Naive thymus-derived CD4-positive, alpha-beta T cell (primary cell): ENCODE measurements at regions of chr7 and their contacts with region 1.

Region 1: GRCh38 chr7:4610768-4611467 is 71.2 kb upstream of the FOXK1 start:
- DNase-seq: peak; percentile 23 to 77 (median 71)
- ATAC-seq: peak; percentile 91
- H3K4me3 ChIP-seq: no peak overlapping the region
- H3K4me3 Mint-ChIP-seq: no peak overlapping the region
- H3K27ac ChIP-seq: no peak overlapping the region
- H3K27ac Mint-ChIP-seq: peak overlapping the region in 3 of 9 donors; percentile 5 to 67 (median 26)
- H3K4me1 ChIP-seq: peaks cover 0 to 12% of the 10 kb centered on the region in 2 donors
- H3K4me1 Mint-ChIP-seq: peaks cover 11 to 28% (median 20%) of the 10 kb centered on the region in 7 donors
- H3K27me3 ChIP-seq: no peaks in the 10 kb centered on the region
- H3K27me3 Mint-ChIP-seq: peaks cover 0 to 3% (median 0%) of the 10 kb centered on the region in 5 donors

Region 2: DNA sequence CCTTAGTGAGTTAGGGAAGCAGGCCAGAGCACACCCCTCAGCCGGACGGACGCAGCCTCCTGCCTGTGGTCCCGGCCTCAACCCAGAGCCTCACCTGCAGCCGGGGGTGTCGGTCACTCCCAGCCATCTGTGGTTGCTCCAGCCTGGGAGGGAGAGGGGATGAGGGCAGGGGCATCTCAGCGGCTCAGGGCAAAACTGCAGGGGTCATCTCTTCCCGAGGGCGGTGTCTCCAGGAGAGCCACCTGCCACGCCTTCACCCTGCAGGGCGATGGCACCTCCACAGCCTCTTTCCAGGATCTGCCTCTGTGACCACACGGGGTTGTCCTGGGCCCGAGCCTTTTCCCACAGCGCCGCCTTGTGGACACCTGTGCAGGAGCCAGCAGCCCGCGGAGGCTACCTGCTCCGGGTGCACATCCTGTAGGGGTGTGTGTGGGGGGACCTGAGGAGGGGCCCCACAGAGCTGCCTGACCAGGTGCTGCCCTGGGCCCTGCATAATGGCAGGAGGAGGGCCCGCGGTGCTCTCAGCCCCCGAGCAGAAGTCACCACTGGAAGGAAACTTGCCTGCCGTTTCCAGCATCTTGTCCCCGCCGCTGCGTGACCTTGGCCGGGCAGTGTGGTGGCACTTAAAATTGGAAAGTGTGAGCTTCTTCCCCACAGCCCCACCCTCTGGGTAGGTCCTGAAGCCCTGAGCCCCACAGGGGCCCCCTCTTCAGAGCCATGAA is 143.0 kb after region 1 on chr7:
- CTCF ChIA-PET with region 1: interaction called, 32 read pairs
- POLR2A ChIA-PET with region 1: interaction called, 4 read pairs
- intact Hi-C with region 1: loop called (anchors 1 kb)
- DNase-seq: peak; percentile 67 to 90 (median 83)
- ATAC-seq: peak; percentile 97
- H3K4me3 ChIP-seq: no peak overlapping the region
- H3K4me3 Mint-ChIP-seq: peak overlapping the region in 4 of 10 donors; percentile 4 to 45 (median 19)
- H3K27ac ChIP-seq: peak overlapping the region; percentile 33
- H3K27ac Mint-ChIP-seq: peak overlapping the region in 3 of 9 donors; percentile 75 to 83 (median 81)
- H3K4me1 ChIP-seq: peaks cover 4 to 20% of the 10 kb centered on the region in 2 donors
- H3K4me1 Mint-ChIP-seq: peaks cover 4 to 41% (median 21%) of the 10 kb centered on the region in 7 donors
- H3K27me3 ChIP-seq: no peaks in the 10 kb centered on the region
- H3K27me3 Mint-ChIP-seq: no peaks in the 10 kb centered on the region